ENCODE measurements at regions of chr12 and their contacts with region 1.

Region 1: DNA sequence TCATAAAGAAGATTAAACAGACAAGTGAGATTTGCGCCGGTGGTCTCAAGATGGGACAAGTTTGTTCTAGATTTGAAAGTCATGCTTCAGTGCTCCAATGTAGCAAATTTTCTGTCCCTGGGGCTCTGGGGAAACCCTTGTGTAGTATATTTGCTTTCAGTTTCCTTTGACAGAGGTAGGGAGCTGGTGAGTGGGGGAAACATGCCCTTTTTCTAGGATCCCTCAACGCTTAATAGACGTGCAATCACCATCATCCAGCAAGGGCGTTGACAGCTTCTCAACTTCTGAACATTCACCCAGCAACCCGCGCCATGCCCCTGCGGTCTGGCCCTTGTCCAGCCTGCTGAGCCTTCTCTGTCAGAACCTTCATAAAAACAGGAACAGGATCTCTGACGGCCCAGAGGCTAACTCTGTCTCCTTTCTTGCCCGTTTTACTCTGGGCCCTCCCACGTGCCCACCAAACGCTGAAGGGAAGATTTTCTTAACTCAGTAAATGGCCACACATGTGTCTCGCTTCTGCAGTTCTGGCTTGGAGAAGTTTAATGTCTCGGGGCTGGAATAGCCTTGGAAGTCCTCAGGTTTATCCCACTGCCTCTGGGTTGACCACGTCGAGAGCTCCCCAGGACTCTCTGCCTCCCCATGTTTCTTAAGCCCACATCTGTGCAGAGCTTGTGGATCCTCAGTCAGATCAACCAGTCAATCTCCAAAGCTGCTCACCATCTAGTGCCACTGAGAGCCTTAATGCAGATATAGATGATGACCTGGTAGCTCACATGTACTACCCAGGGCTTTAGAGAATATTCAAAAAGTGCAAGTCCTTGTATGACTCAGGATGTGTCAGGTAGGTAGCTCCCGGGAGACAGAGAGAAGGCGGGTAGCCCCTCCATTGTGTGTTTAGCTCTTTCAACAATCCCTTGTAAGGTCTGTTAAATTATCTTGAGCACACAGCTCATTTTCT is 58.1 kb upstream of the CCND2 start:
- DNase-seq: peak; percentile 89
- ATAC-seq: peak; percentile 91
- H3K4me3 ChIP-seq: peak overlapping the region; percentile 50; the same call in 1 of the 2 replicates
- H3K27ac ChIP-seq: peak overlapping the region; percentile 93
- H3K4me1 ChIP-seq: peaks cover 27% of the 10 kb centered on the region
- H3K27me3 ChIP-seq: no peaks in the 10 kb centered on the region
- CTCF ChIP-seq: no peak
- EP300 ChIP-seq: peak; percentile 41 to 71; a peak in 3 of 4 replicates
- POLR2A ChIP-seq: peak; percentile 42; the same call in 1 of the 2 replicates
- RAD21 ChIP-seq: no peak; the same call in 1 of the 2 replicates

Region 2: DNA sequence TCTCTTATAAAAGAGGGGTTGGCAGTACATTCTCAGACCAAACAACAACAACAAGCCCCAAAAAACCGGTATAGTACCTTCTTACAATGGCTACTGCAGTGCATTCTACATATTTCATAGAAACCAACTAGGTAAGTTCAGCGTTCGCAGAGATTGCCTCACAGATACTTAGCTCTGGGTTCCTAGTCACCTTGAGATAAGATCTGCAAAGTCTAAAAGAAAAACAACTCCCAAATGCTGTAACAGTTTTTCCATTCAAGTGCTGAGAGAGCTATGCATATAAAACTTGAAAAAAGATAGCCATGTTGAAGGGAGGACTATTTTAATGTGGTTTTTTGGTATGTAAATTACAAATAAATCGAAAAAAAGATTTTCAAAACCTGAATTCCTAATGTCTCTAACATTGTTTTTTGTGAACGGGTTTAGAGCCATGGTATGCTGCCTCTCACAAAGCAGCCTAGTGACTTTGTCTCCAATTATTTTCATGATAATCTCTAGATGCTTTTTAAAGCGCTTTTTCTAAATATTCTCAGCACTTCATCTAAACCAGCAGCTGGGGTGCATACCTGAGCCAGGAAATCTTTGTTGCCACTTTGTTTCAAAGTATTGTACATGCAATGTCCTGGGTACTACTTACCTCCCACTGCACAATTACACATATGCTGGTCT is 406.0 kb before region 1 on chr12:
- CTCF ChIA-PET with region 1: no interaction called
- POLR2A ChIA-PET with region 1: no interaction called
- RAD21 ChIA-PET with region 1: no interaction called
- SMC1A ChIA-PET with region 1: no interaction called
- in situ Hi-C with region 1: no loop called
- intact Hi-C with region 1: no loop called
- DNase-seq: no peak
- ATAC-seq: no peak
- H3K4me3 ChIP-seq: no peak overlapping the region
- H3K27ac ChIP-seq: no peak overlapping the region
- H3K4me1 ChIP-seq: no peaks in the 10 kb centered on the region
- H3K27me3 ChIP-seq: no peaks in the 10 kb centered on the region
- CTCF ChIP-seq: no peak
- EP300 ChIP-seq: no peak
- POLR2A ChIP-seq: no peak
- RAD21 ChIP-seq: no peak

Region 3: DNA sequence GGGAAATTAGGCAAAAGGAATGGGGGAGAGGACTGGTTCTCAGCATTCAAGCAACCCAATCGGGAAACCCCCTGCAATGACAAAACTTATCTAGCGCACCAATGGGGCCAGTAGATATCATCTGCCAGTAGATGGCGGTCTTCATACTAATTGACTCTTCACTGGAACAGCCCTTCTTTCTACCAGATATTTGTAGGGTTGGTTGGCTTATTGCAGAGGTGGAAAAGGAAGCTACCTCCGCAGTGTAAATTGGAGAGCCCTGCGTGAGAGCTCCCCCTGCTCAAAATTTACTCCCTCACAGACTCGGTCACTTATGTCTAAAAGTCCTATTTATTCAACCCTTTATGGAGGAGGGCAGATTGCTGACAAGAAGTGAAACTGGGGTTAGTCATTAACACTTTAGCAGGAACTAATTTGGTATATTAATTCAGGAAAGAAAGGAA is 108.1 kb before region 1 on chr12:
- CTCF ChIA-PET with region 1: interaction called, 18 read pairs
- POLR2A ChIA-PET with region 1: no interaction called
- RAD21 ChIA-PET with region 1: interaction called, 19 read pairs
- SMC1A ChIA-PET with region 1: interaction called, 30 read pairs
- in situ Hi-C with region 1: no loop called
- intact Hi-C with region 1: no loop called
- DNase-seq: peak; percentile 86
- ATAC-seq: peak; percentile 94
- H3K4me3 ChIP-seq: no peak overlapping the region
- H3K27ac ChIP-seq: peak overlapping the region; percentile 13; the same call in 1 of the 2 replicates
- H3K4me1 ChIP-seq: peaks cover 24% of the 10 kb centered on the region
- H3K27me3 ChIP-seq: no peaks in the 10 kb centered on the region
- CTCF ChIP-seq: peak; percentile 70 to 86 (median 84)
- EP300 ChIP-seq: no peak; a peak in 1 of 4 replicates
- POLR2A ChIP-seq: no peak
- RAD21 ChIP-seq: peak; percentile 88

Region 4: DNA sequence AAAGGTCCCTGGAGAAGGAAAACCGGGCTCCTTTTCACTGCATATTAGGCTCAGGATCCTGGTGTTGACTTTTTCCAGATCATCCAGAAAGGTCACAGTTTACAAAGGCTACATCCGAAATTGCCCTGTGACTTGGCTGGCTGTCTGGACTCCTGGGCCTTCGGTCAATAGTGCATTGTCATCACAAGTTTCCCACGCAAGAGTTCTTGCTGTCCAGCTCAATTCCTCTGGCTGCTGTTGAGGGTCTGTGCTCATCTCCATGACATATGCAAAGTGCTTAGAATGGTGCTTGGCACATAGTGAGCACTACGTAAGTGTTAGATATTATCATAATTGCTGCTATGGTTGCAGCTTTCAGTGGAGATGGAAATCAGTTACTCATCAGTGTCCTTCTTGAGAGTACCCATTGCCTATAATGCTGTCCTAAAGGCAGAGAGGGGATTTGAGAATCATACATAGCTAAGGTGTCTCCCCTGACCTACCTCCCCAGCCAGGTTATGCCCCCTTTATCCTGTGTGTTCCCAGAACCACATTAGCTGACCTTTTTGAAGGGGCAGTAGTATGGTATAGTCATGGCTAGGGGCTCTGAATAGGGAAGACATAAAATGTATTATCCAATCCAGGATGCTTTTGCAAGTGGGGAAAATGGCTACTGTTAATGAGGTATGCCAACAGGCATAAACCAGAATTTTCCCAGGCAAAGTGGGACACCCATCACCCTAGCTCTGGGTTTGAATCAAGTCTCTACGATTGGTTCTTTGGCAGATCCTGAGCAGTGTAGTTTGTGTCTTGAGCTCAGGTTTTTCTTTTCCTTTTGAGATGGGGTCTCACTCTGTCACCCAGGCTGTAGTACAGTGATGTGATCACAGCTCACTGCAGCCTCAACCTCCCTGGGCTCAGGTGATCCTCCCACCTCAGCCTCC is 73.9 kb before region 1 on chr12:
- CTCF ChIA-PET with region 1: interaction called, 19 read pairs
- POLR2A ChIA-PET with region 1: interaction called, 11 read pairs
- RAD21 ChIA-PET with region 1: interaction called, 97 read pairs
- SMC1A ChIA-PET with region 1: interaction called, 17 read pairs
- in situ Hi-C with region 1: no loop called
- intact Hi-C with region 1: no loop called
- DNase-seq: no peak
- ATAC-seq: peak; percentile 54
- H3K4me3 ChIP-seq: no peak overlapping the region
- H3K27ac ChIP-seq: peak overlapping the region; percentile 45; the same call in 1 of the 2 replicates
- H3K4me1 ChIP-seq: peaks cover 69% of the 10 kb centered on the region
- H3K27me3 ChIP-seq: no peaks in the 10 kb centered on the region
- CTCF ChIP-seq: no peak
- EP300 ChIP-seq: peak in 1 of 2 experiments; percentile 40; a peak in 1 of 4 replicates
- POLR2A ChIP-seq: no peak
- RAD21 ChIP-seq: no peak

Region 5: DNA sequence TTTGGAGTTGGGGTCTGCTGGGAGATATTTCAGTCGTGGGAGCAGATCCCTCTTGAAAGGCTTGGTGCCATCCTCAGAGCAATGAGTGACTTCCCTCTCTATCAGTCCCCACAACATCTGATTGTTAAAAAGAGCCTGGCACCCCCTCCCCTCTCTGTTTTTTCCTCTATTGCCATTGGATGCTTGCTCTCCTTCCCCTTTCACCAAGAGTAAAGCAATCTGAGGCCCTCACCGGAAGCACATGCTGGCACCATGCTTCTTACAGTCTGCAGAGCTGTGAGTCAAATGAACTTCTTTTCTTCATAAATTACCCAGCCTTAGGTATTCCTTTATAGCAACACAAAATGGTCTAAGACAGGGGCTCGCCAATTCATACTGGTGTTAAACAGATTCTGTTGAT is 41.1 kb before region 1 on chr12:
- CTCF ChIA-PET with region 1: interaction called, 7 read pairs
- POLR2A ChIA-PET with region 1: interaction called, 3 read pairs
- RAD21 ChIA-PET with region 1: interaction called, 4 read pairs
- SMC1A ChIA-PET with region 1: interaction called, 54 read pairs
- in situ Hi-C with region 1: no loop called
- intact Hi-C with region 1: no loop called
- DNase-seq: no peak
- ATAC-seq: no peak
- H3K4me3 ChIP-seq: no peak overlapping the region
- H3K27ac ChIP-seq: no peak overlapping the region
- H3K4me1 ChIP-seq: peaks cover 19% of the 10 kb centered on the region; the same call in 1 of the 2 replicates
- H3K27me3 ChIP-seq: no peaks in the 10 kb centered on the region
- CTCF ChIP-seq: no peak
- EP300 ChIP-seq: no peak
- POLR2A ChIP-seq: no peak
- RAD21 ChIP-seq: no peak

Region 6: GRCh38 chr12:4228122-4228580 is 12.6 kb after region 1 on chr12:
- CTCF ChIA-PET with region 1: no interaction called
- POLR2A ChIA-PET with region 1: interaction called, 3 read pairs
- RAD21 ChIA-PET with region 1: interaction called, 5 read pairs
- SMC1A ChIA-PET with region 1: interaction called, 19 read pairs
- in situ Hi-C with region 1: no loop called
- intact Hi-C with region 1: no loop called
- DNase-seq: no peak
- ATAC-seq: no peak
- H3K4me3 ChIP-seq: no peak overlapping the region
- H3K27ac ChIP-seq: no peak overlapping the region
- H3K4me1 ChIP-seq: peaks cover 11% of the 10 kb centered on the region; the same call in 1 of the 2 replicates
- H3K27me3 ChIP-seq: no peaks in the 10 kb centered on the region; a peak in 1 of 4 replicates
- CTCF ChIP-seq: no peak
- EP300 ChIP-seq: no peak
- POLR2A ChIP-seq: no peak
- RAD21 ChIP-seq: no peak

Region 7: DNA sequence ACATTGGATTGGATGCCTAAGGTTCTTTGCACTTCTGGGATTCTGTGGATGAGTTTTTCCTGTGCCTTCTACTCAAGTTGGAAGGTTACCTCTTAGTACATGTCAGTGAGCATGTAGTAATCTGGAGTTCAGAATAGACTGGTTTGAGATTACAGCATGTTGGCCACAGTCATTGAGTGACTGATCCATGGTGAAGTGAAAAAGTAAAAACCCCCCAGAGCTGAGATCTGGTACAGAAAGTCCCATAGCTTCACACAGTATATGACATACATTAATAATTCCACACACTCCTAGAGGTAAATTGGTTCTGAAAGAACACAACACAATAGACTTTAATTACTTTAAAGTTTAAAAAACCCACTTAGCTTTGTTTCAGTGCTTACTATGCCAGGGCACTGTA is 46.1 kb after region 1 on chr12:
- CTCF ChIA-PET with region 1: interaction called, 12 read pairs
- POLR2A ChIA-PET with region 1: interaction called, 84 read pairs
- RAD21 ChIA-PET with region 1: interaction called, 58 read pairs
- SMC1A ChIA-PET with region 1: interaction called, 53 read pairs
- in situ Hi-C with region 1: no loop called
- intact Hi-C with region 1: loop called (anchors 2 kb)
- DNase-seq: peak; percentile 64
- ATAC-seq: peak; percentile 96
- H3K4me3 ChIP-seq: no peak overlapping the region
- H3K27ac ChIP-seq: peak overlapping the region; percentile 80
- H3K4me1 ChIP-seq: peaks cover 15% of the 10 kb centered on the region
- H3K27me3 ChIP-seq: no peaks in the 10 kb centered on the region
- CTCF ChIP-seq: no peak
- EP300 ChIP-seq: no peak
- POLR2A ChIP-seq: no peak
- RAD21 ChIP-seq: no peak

Region 8: DNA sequence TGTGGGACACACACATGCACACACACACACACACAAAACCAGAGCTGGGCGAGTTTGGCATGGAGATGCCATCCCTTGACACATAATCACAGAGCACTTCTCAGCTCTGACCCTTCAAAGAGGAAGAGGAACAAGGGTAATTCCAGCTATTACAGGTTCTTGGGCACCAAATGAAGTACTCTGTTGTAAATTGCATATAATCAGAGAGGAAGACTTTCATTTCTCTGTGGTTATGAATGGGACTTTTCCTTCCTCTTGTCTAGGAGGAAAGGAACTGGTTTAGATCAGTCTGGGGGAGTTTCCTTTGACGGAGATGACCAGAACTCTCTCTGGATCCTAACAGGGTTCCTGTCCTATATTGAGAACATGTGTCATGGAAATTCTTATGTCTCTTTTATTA is 256.5 kb after region 1 on chr12:
- CTCF ChIA-PET with region 1: no interaction called
- POLR2A ChIA-PET with region 1: no interaction called
- RAD21 ChIA-PET with region 1: no interaction called
- SMC1A ChIA-PET with region 1: no interaction called
- in situ Hi-C with region 1: no loop called
- intact Hi-C with region 1: no loop called
- DNase-seq: peak; percentile 13
- ATAC-seq: peak; percentile 60
- H3K4me3 ChIP-seq: no peak overlapping the region
- H3K27ac ChIP-seq: no peak overlapping the region
- H3K4me1 ChIP-seq: no peaks in the 10 kb centered on the region
- H3K27me3 ChIP-seq: no peaks in the 10 kb centered on the region; a peak in 1 of 4 replicates
- CTCF ChIP-seq: no peak
- EP300 ChIP-seq: no peak
- POLR2A ChIP-seq: no peak
- RAD21 ChIP-seq: no peak

Measured in GM12878 (cell line).